Dorsolateral prefrontal cortex (tissue), 120 donors: ENCODE measurements at regions of chr10 and their contacts with region 1.

Region 1: DNA sequence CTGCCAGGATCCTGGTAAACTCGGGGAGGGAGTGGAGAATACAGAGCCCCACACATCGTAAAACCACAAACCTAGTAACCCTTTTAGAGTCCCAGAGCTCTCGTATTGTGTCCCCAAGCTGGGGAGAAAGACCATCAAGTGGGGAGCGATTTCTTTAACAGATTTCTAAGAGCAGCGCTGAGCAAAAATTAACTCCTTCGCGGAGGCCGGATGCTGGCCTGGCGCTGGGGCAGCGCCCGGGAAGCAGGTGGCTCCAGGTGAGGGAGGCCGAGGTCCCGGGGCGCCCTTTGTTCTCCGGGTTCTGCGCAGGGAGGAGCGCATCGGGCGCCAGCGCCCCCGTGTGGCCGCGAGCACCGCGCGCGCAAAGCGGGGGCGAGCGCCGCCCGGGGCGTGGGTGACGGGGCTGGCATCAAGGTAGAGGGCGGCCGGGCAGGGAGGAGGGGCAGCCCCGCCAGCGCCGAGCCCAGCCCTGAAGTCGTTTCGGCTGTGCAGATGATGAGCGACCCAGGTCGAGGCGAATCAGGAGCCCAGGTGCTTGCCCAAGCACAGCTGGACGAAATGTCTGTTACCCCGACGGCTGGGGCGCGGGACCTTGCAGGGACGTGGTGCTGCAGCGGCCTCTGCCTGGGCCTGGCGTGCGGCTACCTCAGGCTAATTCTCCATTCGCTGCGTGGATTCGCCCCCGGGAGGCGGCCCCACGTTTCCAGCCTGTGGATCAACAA is 10.4 kb upstream of the FGFR2 start:
- DNase-seq: peak in 4 of 10 donors; percentile 50 to 77 (median 60)
- H3K4me3 ChIP-seq: peak overlapping the region; percentile 29 to 74 (median 59)
- H3K27ac ChIP-seq: peak overlapping the region in 48 of 59 donors; percentile 2 to 97 (median 72)
- H3K27me3 ChIP-seq: peaks cover 0 to 6% (median 0%) of the 10 kb centered on the region in 45 donors
- CTCF ChIP-seq: peak; percentile 78 to 99 (median 93)

Region 2: DNA sequence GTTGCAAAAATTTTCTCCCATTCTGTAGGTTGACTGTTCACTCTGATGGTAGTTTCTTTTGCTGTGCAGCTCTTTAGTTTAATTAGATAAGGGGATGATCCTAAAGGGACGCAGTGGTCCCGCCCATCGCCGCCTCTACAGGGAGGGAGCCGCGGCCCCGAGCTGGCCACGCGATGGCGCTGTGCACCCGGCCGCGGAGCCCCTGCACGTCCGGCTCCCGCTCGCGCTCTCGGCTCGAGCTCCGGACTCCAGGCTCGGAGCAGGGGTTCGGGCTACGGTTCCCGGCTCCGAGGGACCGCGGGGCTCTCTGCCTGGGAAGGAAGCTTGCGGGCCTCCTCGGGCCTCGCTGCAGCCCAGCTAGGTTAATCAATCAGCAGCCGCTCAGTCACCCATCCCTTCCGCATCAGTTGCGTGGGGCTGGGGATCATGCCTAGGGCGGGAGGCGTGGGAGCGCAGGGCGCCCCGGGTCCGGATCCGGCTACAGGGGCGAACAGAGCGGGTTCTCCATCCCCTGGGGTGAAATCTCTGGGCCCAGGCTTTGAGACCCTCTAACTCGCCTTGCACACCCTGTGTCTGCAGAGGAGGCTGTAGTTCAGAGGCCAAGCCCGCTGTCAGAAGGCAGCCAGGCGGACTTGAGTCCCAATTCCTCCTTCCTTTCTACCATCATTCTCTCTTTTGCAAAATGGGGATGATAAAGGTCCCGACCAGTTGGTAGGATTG is 659.6 kb before region 1 on chr10:
- intact Hi-C with region 1: loop called in 1 of 2 experiments (anchors 1 kb)
- DNase-seq: peak; percentile 26 to 88 (median 67)
- H3K4me3 ChIP-seq: peak overlapping the region; percentile 19 to 80 (median 59)
- H3K27ac ChIP-seq: peak overlapping the region in 41 of 59 donors; percentile 4 to 88 (median 61)
- H3K27me3 ChIP-seq: peaks cover 0 to 4% (median 0%) of the 10 kb centered on the region in 45 donors
- CTCF ChIP-seq: peak; percentile 77 to 98 (median 94)

Region 3: DNA sequence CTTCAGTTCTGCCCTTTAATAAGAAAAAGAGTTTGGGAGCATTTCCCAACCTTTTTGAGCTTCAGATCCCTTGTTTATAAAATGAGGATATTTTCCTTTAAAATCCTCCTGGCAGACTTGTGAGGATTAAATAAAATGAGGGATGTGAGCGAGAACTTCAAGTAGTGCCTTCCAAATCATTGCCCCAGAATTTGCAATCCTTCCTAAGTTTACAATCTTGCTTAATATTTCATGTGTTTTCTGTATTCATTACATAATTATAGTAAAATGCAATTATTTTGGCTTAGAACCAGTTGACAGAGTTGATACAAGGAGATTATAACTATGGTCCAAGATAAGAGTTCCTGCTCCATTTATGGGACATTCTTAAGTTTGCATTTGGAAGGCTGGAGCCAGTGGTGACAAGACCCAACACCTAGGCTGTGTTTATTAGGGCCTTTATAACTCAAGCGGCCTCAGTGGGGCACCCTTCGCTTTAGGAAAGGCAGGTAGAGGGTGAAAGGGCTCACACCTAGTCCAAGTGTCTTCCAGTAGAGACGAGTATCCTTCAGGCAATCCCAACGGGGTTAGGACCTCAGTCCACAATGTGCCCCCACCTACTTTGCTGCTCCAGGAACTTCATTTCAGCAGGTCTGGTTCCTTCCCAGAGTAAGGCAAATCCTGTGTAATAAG is 439.9 kb before region 1 on chr10:
- intact Hi-C with region 1: loop called in 1 of 2 experiments (anchors 10 kb)
- DNase-seq: no peak
- H3K4me3 ChIP-seq: no peak overlapping the region
- H3K27ac ChIP-seq: no peak overlapping the region
- H3K27me3 ChIP-seq: no peaks in the 10 kb centered on the region
- CTCF ChIP-seq: no peak

Region 4: GRCh38 chr10:121627821-121628581 is 19.4 kb after region 1 on chr10:
- intact Hi-C with region 1: no loop called
- DNase-seq: no peak
- H3K4me3 ChIP-seq: peak overlapping the region in 33 of 59 donors; percentile 3 to 45 (median 21)
- H3K27ac ChIP-seq: peak overlapping the region in 47 of 59 donors; percentile 1 to 79 (median 49)
- H3K27me3 ChIP-seq: no peaks in the 10 kb centered on the region
- CTCF ChIP-seq: no peak

Region 5: GRCh38 chr10:121709675-121710073 is 101.0 kb after region 1 on chr10:
- intact Hi-C with region 1: no loop called
- DNase-seq: no peak
- H3K4me3 ChIP-seq: peak overlapping the region in 5 of 59 donors; percentile 4 to 26 (median 15)
- H3K27ac ChIP-seq: peak overlapping the region in 27 of 59 donors; percentile 2 to 70 (median 53)
- H3K27me3 ChIP-seq: peaks cover 0 to 8% (median 0%) of the 10 kb centered on the region in 45 donors
- CTCF ChIP-seq: no peak

Region 6: GRCh38 chr10:121734589-121735045 is 126.0 kb after region 1 on chr10:
- intact Hi-C with region 1: loop called (anchors 5 kb)
- DNase-seq: peak in 2 of 10 donors; percentile 7 to 56
- H3K4me3 ChIP-seq: peak overlapping the region in 52 of 59 donors; percentile 8 to 61 (median 42)
- H3K27ac ChIP-seq: peak overlapping the region in 8 of 59 donors; percentile 5 to 60 (median 16)
- H3K27me3 ChIP-seq: no peaks in the 10 kb centered on the region
- CTCF ChIP-seq: peak; percentile 62 to 89 (median 83)

Region 7: GRCh38 chr10:121900443-121901174 is 292.0 kb after region 1 on chr10:
- intact Hi-C with region 1: loop called (anchors 5 to 10 kb)
- DNase-seq: no peak
- H3K4me3 ChIP-seq: no peak overlapping the region
- H3K27ac ChIP-seq: peak overlapping the region in 11 of 59 donors; percentile 1 to 52 (median 34)
- H3K27me3 ChIP-seq: no peaks in the 10 kb centered on the region
- CTCF ChIP-seq: peak; percentile 59 to 95 (median 81)